ENCODE measurements at regions of chr3 and their contacts with region 1.

Region 1: DNA sequence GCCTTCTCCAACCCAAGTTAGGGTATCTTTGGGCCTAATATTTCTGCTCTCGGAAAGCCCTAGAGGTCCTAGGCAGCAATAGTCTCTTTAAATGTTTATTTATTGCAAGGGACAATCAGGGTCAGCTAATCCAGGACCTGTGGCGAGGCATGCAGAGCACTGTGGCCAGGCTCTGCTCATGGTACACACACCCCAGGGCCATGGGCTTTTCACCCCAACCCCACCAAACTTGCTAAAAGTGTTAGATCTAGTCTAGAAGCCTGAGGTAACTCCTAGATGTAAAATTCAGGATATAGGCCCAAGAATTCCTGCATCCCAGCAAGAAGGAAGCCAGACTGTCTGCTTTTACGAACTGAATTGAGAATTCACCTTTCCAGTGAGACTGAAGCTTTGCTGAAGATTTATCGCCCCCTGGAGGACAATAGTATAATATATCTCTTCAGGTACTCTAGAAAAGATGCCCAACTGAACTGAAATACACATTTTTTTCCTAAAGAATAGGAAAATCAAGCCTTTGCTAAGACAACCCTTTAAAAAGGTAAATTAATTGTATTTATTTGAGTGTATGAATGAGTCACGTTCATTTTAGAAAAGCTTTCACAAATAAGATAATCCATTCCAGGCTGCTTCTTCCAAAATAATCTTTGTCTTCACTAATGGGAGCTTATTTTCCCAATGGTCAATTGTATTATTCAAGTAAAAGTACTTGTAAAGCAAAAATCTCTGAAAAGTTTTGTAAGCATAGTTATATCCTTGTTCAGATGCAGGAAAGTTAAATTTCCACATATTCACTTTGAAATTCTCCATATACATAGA is 89.8 kb downstream of the LRRC3B start:
- DNase-seq: peak; percentile 5
- ATAC-seq: no peak
- H3K4me3 Mint-ChIP-seq: no peak overlapping the region
- H3K27ac Mint-ChIP-seq: no peak overlapping the region
- H3K4me1 Mint-ChIP-seq: no peaks in the 10 kb centered on the region
- H3K27me3 Mint-ChIP-seq: no peaks in the 10 kb centered on the region

Region 2: GRCh38 chr3:25532431-25533162 is 1179.8 kb before region 1 on chr3:
- CTCF ChIA-PET with region 1: no interaction called
- POLR2A ChIA-PET with region 1: no interaction called
- intact Hi-C with region 1: loop called in 1 of 2 experiments (anchors 2 kb)
- DNase-seq: peak; percentile 67
- ATAC-seq: peak; percentile 33
- H3K4me3 Mint-ChIP-seq: no peak overlapping the region
- H3K27ac Mint-ChIP-seq: no peak overlapping the region
- H3K4me1 Mint-ChIP-seq: no peaks in the 10 kb centered on the region
- H3K27me3 Mint-ChIP-seq: peaks cover 4% of the 10 kb centered on the region

Region 3: DNA sequence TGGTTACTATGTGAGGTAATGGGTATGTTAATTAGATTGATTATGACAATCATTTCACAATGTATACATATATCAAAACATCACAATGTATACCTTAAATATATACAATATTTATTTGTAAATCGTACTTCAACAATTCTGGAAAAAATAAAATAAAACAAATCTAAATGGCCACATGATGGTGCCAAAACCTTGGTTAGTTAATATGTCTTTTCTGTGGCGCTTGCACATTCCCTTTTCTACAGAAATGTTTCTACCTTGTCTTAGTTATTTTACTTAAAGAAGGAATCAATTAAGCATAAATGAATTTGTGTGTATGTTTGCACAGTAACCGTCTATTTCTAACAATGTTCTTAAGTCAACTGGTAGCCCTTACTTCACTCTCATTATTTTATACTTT is 869.1 kb before region 1 on chr3:
- CTCF ChIA-PET with region 1: no interaction called
- POLR2A ChIA-PET with region 1: no interaction called
- intact Hi-C with region 1: loop called in 1 of 2 experiments (anchors 10 kb)
- DNase-seq: no peak
- ATAC-seq: no peak
- H3K4me3 Mint-ChIP-seq: no peak overlapping the region
- H3K27ac Mint-ChIP-seq: no peak overlapping the region
- H3K4me1 Mint-ChIP-seq: no peaks in the 10 kb centered on the region
- H3K27me3 Mint-ChIP-seq: peaks cover 7% of the 10 kb centered on the region

Region 4: DNA sequence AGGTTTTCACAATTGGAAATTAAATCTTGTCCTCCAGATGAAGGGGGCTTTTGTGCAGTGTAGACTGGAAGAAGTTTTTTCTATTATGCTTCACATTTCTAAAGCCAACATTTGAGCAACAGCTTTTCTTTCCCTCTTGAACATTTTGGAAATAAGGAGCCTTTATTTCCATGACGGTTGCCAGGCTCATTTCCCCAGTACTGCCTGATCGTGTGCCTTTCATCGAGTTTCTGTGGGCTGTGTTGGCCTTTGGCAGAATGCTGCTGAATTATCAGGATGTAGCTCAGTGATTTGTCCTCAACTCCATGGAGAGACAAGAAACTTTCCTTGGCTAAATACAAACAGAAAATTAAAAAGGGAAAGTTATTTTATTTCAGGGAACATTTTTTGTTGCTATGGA is 404.6 kb before region 1 on chr3:
- CTCF ChIA-PET with region 1: no interaction called
- POLR2A ChIA-PET with region 1: no interaction called
- intact Hi-C with region 1: no loop called
- DNase-seq: no peak
- ATAC-seq: no peak
- H3K4me3 Mint-ChIP-seq: no peak overlapping the region
- H3K27ac Mint-ChIP-seq: no peak overlapping the region
- H3K4me1 Mint-ChIP-seq: no peaks in the 10 kb centered on the region
- H3K27me3 Mint-ChIP-seq: no peaks in the 10 kb centered on the region

Region 5: GRCh38 chr3:26559227-26559626 is 153.2 kb before region 1 on chr3:
- CTCF ChIA-PET with region 1: no interaction called
- POLR2A ChIA-PET with region 1: no interaction called
- intact Hi-C with region 1: no loop called
- DNase-seq: no peak
- ATAC-seq: no peak
- H3K4me3 Mint-ChIP-seq: no peak overlapping the region
- H3K27ac Mint-ChIP-seq: no peak overlapping the region
- H3K4me1 Mint-ChIP-seq: no peaks in the 10 kb centered on the region
- H3K27me3 Mint-ChIP-seq: no peaks in the 10 kb centered on the region

Measured in activated CD4-positive, alpha-beta T cell treated with anti-CD3 and anti-CD28 coated beads for 36 hours (primary cell).